Vagina (tissue), 2 donors: ENCODE measurements at regions of chr10 and their contacts with region 1.

Region 1: GRCh38 chr10:74244097-74244685 is 93.2 kb downstream of the ADK start:
- DNase-seq: no peak
- H3K4me3 ChIP-seq: no peak overlapping the region
- H3K27ac ChIP-seq: no peak overlapping the region
- H3K4me1 ChIP-seq: no peaks in the 10 kb centered on the region
- H3K27me3 ChIP-seq: no peaks in the 10 kb centered on the region
- CTCF ChIP-seq: peak; percentile 46 to 57 (median 46)
- POLR2A ChIP-seq: no peak

Region 2: DNA sequence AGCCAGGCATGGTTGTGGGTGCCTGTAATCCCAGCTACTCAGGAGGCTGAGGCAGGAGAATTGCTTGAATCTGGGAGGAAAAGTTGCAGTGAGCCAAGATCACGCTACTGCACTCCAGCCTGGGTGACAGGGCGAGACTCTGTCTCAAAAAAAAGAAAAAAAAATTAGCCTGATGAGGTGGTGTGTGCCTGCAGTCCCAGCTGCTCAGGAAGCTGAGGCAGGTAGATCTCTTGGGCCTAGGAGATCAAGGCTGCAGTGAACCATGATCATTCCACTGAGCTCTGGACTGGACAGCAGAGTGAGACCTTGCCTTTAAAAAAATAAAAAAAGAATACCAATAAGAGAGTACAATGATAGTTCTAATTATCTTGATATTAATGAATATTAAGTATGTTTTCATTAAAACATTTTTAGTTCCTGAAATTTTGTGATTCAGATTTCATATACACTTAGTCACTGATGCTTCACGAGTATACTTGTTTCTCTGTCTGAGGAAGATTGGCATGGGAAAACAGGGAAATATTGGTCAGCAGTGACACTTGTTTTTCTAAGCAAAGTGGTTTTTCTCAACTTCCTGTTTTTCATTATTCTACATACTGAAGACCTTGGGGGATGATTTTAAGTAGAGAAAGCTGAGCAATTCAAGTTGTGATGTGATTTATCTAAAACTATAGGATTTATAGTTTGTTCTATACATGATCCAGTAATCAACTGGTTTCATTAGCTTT is 16.3 kb before region 1 on chr10:
- intact Hi-C with region 1: no loop called
- DNase-seq: no peak
- H3K4me3 ChIP-seq: no peak overlapping the region
- H3K27ac ChIP-seq: no peak overlapping the region
- H3K4me1 ChIP-seq: no peaks in the 10 kb centered on the region
- H3K27me3 ChIP-seq: no peaks in the 10 kb centered on the region
- CTCF ChIP-seq: no peak
- POLR2A ChIP-seq: no peak

Region 3: DNA sequence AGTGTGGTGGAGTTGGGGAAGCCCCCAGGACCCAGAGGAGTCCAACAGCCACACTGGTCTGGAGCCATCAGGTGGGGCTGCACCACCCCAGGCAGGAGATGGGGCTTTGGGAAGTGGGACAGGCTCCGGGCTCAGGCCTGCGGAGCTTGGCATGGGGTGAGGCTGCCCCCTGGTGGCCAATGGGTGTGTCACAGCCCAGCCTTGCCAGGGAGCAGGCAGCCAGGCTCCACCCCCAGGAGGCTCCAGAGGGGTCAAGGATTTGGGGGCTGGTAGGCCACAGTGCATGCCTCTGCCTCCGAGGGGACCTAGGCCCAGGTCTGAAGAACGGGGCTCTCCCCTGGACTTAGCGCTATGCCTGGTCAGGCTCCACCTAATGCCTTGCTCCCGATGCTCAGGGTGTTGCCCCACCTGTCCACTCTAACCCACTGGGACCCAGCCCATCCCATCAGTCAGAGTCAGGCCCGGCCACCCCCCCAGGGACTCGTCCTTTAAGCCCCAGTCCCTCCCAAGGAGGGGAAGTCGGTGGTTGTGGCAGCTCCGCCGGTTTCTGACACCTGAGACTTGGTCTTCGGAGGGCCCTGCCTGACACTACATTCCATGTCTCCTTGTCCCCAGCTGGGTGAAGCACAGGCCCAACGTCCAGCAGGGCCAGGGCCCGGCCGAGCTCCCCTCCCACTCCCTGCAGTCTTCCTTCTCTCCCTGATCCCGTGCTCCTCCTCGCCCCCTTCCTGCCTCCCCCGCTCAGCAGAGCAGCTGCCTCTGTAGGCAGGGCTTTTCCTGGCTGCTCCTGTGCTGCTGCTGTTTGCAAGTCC is 856.0 kb after region 1 on chr10:
- intact Hi-C with region 1: loop called (anchors 5 kb)
- DNase-seq: no peak
- H3K4me3 ChIP-seq: no peak overlapping the region
- H3K27ac ChIP-seq: peak overlapping the region; percentile 66
- H3K4me1 ChIP-seq: peaks cover 14% of the 10 kb centered on the region
- H3K27me3 ChIP-seq: no peaks in the 10 kb centered on the region
- CTCF ChIP-seq: peak; percentile 98 to 99 (median 98)
- POLR2A ChIP-seq: no peak